Panc1 (cell line): ENCODE measurements at regions of chr11 and their contacts with region 1.

Region 1: DNA sequence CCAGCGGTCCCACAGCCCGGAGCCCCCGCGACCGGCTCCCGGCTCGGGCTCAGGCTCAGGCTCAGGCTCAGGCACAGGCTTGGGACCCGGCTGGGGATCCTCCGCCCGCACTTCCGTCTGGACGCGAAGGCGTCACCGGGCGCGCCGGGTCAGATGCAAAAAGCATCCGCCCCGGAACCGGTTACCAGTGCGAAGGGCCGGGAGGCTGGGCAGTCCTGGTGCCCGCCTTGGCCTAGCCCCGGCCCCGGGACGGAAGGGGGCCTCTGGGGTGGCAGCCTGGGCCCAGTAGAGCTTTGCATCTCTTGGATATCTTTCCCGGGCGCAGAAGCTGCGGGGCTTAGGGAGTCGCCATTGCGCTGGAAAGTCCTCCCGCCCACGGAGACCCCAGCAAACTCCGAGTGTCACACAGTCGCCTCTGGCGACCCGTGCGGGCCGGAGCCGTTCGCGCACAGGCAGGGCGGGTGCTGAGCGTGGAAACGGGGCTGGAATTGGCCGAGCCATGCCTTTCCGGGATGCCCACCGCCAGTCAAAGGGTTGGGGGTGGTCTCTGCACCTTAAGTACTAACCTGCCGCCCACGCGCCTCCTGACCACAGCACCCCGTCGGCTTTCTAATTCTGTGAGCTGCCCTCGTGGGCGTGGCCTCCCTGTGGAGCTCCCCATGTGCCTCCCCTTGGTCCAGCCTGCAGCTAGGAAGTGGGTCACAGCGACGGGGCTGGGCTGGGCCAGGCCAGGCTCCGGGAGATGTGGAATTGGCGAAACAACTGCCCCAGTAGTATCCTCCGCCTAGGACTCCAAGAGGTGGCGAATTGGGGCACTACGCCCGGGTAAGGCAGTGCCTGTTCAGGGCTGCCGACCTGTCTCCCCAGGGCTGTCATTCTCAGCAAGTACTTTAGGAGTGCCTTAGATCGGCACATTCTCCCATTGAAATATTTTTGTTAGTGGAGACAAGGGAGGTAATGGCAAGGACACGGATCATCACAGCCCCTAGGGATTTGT is at the start of gene TMEM9B:
- DNase-seq: peak; percentile 73
- ATAC-seq: peak; percentile 94
- H3K4me3 ChIP-seq: peak within 1 kb of the TSS; percentile 61 to 86
- H3K27ac ChIP-seq: peak within 1 kb of the TSS; percentile 93
- H3K4me1 ChIP-seq: peaks cover 27% of the 10 kb centered on the region
- H3K27me3 ChIP-seq: no peaks in the 10 kb centered on the region
- CTCF ChIP-seq: no peak
- total RNA-seq, gene TMEM9B: 76.2 TPM

Region 2: GRCh38 chr11:8658321-8659057 is 306.1 kb before region 1 on chr11:
- CTCF ChIA-PET with region 1: no interaction called
- POLR2A ChIA-PET with region 1: interaction called, 11 read pairs
- in situ Hi-C with region 1: no loop called
- intact Hi-C with region 1: no loop called
- DNase-seq: no peak
- ATAC-seq: no peak
- H3K4me3 ChIP-seq: no peak overlapping the region
- H3K27ac ChIP-seq: no peak overlapping the region
- H3K4me1 ChIP-seq: no peaks in the 10 kb centered on the region
- H3K27me3 ChIP-seq: no peaks in the 10 kb centered on the region
- CTCF ChIP-seq: no peak

Region 3: GRCh38 chr11:8688414-8689362 is 275.9 kb before region 1 on chr11:
- CTCF ChIA-PET with region 1: interaction called, 12 read pairs
- POLR2A ChIA-PET with region 1: no interaction called
- in situ Hi-C with region 1: no loop called
- intact Hi-C with region 1: loop called (anchors 5 kb)
- DNase-seq: peak; percentile 98
- ATAC-seq: peak; percentile 92
- H3K4me3 ChIP-seq: peak overlapping the region; percentile 68 to 69
- H3K27ac ChIP-seq: peak overlapping the region; percentile 100
- H3K4me1 ChIP-seq: peaks cover 49% of the 10 kb centered on the region
- H3K27me3 ChIP-seq: no peaks in the 10 kb centered on the region
- CTCF ChIP-seq: peak; percentile 69; the same call in 1 of the 2 replicates

Region 4: DNA sequence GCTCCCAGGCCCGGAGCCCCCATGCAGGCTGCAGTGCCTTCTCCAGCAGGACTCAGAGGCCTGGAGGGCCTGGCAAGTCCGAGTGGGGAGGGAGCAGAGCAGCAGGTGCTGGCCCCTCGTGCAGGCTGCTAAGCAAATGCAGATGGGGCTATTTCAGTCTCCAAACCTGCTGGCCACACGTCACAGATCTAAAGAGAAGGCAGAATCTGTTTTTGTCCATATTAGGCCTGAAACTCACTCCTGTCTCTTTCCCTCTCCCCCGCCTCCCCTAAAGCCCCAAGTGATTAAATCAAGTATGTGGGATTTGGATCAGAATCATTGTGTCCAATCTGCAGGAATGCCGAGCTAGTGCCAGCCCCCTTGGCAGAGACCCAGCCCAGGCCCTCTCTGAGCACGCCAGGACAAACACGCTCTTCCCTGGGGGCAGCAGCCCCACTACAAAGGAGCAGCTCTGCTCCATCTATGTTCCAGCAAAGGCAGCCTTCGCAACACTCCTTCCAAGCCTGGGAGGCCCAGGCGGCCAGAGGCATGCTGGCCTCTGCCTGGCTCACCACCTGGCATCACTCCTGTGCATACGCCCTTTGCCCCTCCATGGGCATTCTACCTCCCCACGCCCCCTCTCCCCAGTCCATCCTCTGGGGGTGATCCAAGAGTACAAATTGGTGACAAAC is 255.5 kb before region 1 on chr11:
- CTCF ChIA-PET with region 1: no interaction called
- POLR2A ChIA-PET with region 1: interaction called, 19 read pairs
- in situ Hi-C with region 1: no loop called
- intact Hi-C with region 1: no loop called
- DNase-seq: no peak
- ATAC-seq: no peak
- H3K4me3 ChIP-seq: no peak overlapping the region
- H3K27ac ChIP-seq: no peak overlapping the region
- H3K4me1 ChIP-seq: no peaks in the 10 kb centered on the region
- H3K27me3 ChIP-seq: no peaks in the 10 kb centered on the region
- CTCF ChIP-seq: no peak

Region 5: GRCh38 chr11:8851316-8851715 is 113.3 kb before region 1 on chr11:
- CTCF ChIA-PET with region 1: no interaction called
- POLR2A ChIA-PET with region 1: interaction called, 16 read pairs
- in situ Hi-C with region 1: no loop called
- intact Hi-C with region 1: no loop called
- DNase-seq: no peak
- ATAC-seq: no peak
- H3K4me3 ChIP-seq: no peak overlapping the region
- H3K27ac ChIP-seq: no peak overlapping the region
- H3K4me1 ChIP-seq: no peaks in the 10 kb centered on the region
- H3K27me3 ChIP-seq: no peaks in the 10 kb centered on the region
- CTCF ChIP-seq: no peak

Region 6: DNA sequence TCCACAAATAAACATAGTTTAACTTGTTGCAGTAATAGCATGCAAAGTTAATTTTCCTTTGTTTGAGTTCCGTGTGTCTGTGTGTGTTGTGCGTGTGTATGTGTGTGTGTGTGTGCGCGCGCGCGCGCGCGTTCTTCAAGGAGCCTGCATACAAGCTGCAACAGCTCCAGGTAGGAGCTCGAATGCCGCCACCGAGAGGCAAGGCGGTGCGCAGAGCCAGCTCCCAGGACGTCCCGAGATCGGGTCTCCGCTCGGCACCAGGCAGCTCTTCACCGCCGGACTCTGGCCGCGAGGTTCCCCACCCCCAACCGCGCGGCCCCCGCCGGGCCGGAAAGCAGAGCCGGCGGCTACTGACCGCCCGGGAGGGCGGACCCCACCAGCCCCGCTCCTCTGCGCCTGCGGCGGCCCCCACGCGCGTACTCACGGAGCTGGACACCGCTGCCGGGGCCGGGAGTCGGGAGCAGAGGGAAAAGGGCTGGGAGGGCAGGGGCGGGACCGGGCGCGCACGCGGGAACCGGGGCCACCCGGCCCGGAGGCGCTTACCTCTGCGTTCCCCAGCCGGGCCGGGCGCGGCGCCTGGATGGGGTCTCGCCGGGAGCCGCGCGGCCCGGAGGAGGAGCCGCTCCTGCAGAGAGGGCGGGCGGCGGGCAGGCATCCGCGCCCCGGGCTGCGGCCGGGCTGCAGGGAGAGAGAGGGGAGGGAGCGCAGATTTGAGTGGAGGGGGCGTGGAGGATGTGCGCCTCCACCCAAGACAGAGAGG is 94.0 kb before region 1 on chr11:
- CTCF ChIA-PET with region 1: no interaction called
- POLR2A ChIA-PET with region 1: no interaction called
- in situ Hi-C with region 1: no loop called
- intact Hi-C with region 1: no loop called
- DNase-seq: no peak
- ATAC-seq: peak; percentile 90
- H3K4me3 ChIP-seq: peak overlapping the region; percentile 67 to 72
- H3K27ac ChIP-seq: peak overlapping the region; percentile 73
- H3K4me1 ChIP-seq: peaks cover 30% of the 10 kb centered on the region
- H3K27me3 ChIP-seq: no peaks in the 10 kb centered on the region
- CTCF ChIP-seq: peak; percentile 55

Region 7: DNA sequence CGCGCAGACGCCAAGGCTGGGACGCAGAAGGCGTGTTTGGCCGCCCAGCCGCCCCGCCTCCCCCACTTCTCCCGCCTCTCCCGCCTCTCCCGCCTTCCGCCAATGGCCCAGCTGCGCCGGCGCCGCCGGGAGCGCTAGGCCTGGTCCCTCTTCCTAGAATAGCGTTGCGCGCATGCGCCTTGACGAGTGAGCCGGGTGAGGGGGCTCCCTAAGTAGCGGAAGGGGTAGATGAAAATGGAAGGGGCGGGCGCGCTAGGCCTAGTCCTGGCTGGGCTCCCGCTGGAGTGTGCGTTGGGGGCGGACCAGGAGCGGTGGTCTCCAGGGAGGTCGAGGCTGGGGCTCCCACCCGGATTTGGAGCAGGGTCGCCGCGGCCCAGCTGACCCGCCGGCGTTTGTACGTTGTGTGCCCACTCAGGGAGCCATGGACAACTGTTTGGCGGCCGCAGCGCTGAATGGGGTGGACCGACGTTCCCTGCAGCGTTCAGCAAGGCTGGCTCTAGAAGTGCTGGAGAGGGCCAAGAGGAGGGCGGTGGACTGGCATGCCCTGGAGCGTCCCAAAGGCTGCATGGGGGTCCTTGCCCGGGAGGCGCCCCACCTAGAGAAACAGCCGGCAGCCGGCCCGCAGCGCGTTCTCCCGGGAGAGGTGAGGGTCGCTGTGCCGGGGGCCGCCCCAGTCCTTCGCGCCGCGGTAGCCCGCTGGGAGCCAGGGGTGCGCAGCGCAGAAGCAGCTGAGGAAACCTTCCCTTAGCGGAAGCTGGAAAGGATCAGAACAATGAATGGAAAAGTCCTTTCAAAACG is 53.4 kb before region 1 on chr11 and contains the start of gene AKIP1:
- CTCF ChIA-PET with region 1: interaction called, 43 read pairs
- POLR2A ChIA-PET with region 1: interaction called, 5 read pairs
- in situ Hi-C with region 1: no loop called
- intact Hi-C with region 1: loop called (anchors 1 kb)
- DNase-seq: no peak
- ATAC-seq: peak; percentile 94
- H3K4me3 ChIP-seq: peak within 1 kb of the TSS; percentile 72 to 81
- H3K27ac ChIP-seq: peak within 1 kb of the TSS; percentile 88
- H3K4me1 ChIP-seq: peaks cover 28% of the 10 kb centered on the region
- H3K27me3 ChIP-seq: no peaks in the 10 kb centered on the region
- CTCF ChIP-seq: no peak
- total RNA-seq, gene AKIP1: 85.2 TPM

Region 8: GRCh38 chr11:9137293-9138132 is 172.9 kb after region 1 on chr11:
- CTCF ChIA-PET with region 1: interaction called, 11 read pairs
- POLR2A ChIA-PET with region 1: interaction called, 4 read pairs
- in situ Hi-C with region 1: no loop called
- intact Hi-C with region 1: no loop called
- DNase-seq: peak; percentile 61
- ATAC-seq: peak; percentile 84
- H3K4me3 ChIP-seq: no peak overlapping the region
- H3K27ac ChIP-seq: peak overlapping the region; percentile 37
- H3K4me1 ChIP-seq: peaks cover 39% of the 10 kb centered on the region
- H3K27me3 ChIP-seq: no peaks in the 10 kb centered on the region
- CTCF ChIP-seq: peak; percentile 100